ENCODE measurements at regions of chr7 and their contacts with region 1.

Region 1: DNA sequence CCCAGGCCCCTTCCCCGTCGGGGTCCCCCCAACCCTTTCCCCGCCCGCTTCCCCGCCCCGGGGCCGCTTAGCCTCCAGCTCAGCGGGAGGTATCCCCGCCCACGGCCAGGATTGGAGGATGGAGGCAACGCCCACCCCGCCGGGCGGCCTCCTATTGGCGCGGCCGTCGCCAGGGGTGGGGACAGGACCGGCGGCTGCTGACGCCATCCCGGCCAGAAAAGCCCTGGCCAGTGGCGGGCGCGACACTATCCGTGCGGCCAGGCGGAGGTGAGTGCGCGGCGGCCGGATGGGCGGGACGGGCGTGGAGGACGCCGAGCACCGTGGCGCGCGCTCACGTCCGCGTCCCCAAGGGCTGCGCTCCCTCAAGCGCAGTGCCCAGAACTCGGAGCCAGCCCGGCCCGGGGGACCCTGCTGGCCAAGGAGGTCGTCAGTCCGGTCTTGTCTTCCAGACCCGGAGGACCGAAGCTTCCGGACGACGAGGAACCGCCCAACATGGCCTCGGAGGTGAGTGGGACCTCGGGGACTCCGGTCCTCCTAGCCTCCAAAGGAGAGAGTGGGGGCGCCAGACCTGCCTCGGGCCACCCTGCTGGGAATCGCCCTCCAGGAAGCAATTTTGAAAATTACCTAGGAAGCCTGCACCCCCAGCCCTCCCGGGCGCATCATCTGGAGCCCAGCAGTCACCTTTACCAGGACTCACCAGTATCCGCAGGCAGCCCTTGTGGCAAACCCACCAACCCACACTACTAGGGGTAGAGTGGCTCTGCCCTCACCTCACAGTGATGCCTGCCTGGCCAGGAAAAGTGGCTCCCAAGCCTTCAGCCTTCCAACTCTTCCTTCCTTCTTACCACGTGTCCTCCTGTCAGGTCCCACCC is at the start of gene ASL:
- DNase-seq: peak; percentile 92
- ATAC-seq: peak; percentile 97 to 99 (median 97)
- H3K4me3 ChIP-seq: peak within 1 kb of the TSS; percentile 99
- H3K4me3 Mint-ChIP-seq: peak within 1 kb of the TSS; percentile 88
- H3K27ac ChIP-seq: peak within 1 kb of the TSS; percentile 82
- H3K27ac Mint-ChIP-seq: peak within 1 kb of the TSS; percentile 75 to 89
- H3K4me1 ChIP-seq: peaks cover 20% of the 10 kb centered on the region
- H3K4me1 Mint-ChIP-seq: peaks cover 18 to 23% of the 10 kb centered on the region in 2 donors
- H3K27me3 ChIP-seq: no peaks in the 10 kb centered on the region
- H3K27me3 Mint-ChIP-seq: no peaks in the 10 kb centered on the region
- CTCF ChIP-seq: no peak
- total RNA-seq, gene ASL: 58.1 to 69.9 (median 60.0) TPM

Region 2: GRCh38 chr7:66016129-66016457 is 59.7 kb before region 1 on chr7:
- intact Hi-C with region 1: no loop called
- DNase-seq: no peak
- ATAC-seq: no peak
- H3K4me3 ChIP-seq: no peak overlapping the region
- H3K4me3 Mint-ChIP-seq: no peak overlapping the region
- H3K27ac ChIP-seq: no peak overlapping the region
- H3K27ac Mint-ChIP-seq: no peak overlapping the region
- H3K4me1 ChIP-seq: no peaks in the 10 kb centered on the region
- H3K4me1 Mint-ChIP-seq: no peaks in the 10 kb centered on the region
- H3K27me3 ChIP-seq: no peaks in the 10 kb centered on the region
- H3K27me3 Mint-ChIP-seq: peaks cover 4 to 13% of the 10 kb centered on the region in 2 donors
- CTCF ChIP-seq: no peak

Region 3: DNA sequence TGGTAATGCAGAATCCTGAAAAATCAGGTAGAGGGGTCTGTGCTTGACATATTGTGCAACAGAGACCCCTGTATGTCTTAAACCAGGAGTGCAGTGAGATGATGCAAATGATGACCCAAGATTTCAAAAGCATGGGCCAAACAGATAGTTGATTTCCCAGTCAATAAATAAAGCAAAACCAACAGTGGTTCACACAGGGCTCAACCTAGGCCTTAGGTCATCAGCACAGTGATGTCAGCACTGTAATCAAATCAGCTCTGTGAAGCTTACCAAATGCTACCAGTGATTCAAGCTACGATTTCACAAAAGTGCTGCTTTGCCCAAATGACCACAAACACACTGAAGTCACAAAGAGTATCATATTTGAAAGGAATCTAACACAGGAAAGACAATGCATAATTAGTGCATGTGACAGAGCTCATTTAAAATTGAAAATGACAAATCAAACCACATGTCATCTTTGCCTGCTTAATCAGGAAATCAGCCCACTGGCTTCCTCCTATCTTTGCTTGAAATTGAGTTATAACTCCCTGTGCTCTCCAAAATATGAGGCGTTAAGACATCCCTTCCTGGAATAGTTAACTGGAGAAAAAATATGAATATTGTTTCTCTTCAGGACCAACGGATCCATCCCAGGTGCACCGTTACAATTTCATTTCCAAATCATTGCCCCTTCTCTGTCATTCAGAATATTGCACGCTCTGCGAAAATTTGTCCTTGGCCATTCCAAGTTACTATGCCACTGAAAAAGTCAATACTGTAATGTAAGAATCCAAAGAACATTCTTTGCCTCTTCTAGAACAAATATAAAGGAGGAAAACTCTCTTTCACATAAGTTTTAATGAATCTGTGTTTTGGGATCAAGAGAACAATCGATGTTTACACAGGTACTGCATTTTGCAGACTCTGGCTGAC is 42.1 kb before region 1 on chr7:
- intact Hi-C with region 1: loop called (anchors 2 kb)
- DNase-seq: peak; percentile 28 to 40
- ATAC-seq: peak; percentile 91 to 96 (median 93)
- H3K4me3 ChIP-seq: no peak overlapping the region
- H3K4me3 Mint-ChIP-seq: peak overlapping the region; percentile 66
- H3K27ac ChIP-seq: peak overlapping the region; percentile 75
- H3K27ac Mint-ChIP-seq: peak overlapping the region; percentile 82 to 96
- H3K4me1 ChIP-seq: peaks cover 6% of the 10 kb centered on the region
- H3K4me1 Mint-ChIP-seq: peaks cover 22 to 23% of the 10 kb centered on the region in 2 donors
- H3K27me3 ChIP-seq: no peaks in the 10 kb centered on the region
- H3K27me3 Mint-ChIP-seq: no peaks in the 10 kb centered on the region
- CTCF ChIP-seq: no peak

Region 4: GRCh38 chr7:66114793-66115649 is 39.2 kb after region 1 on chr7 and contains the start of gene CRCP:
- intact Hi-C with region 1: loop called (anchors 1 kb)
- DNase-seq: peak; percentile 86 to 93
- ATAC-seq: peak; percentile 81 to 93 (median 84)
- H3K4me3 ChIP-seq: peak within 1 kb of the TSS; percentile 69
- H3K4me3 Mint-ChIP-seq: peak within 1 kb of the TSS; percentile 98
- H3K27ac ChIP-seq: peak within 1 kb of the TSS; percentile 83
- H3K27ac Mint-ChIP-seq: peak within 1 kb of the TSS; percentile 99 to 100
- H3K4me1 ChIP-seq: peaks cover 20% of the 10 kb centered on the region
- H3K4me1 Mint-ChIP-seq: peaks cover 42 to 45% of the 10 kb centered on the region in 2 donors
- H3K27me3 ChIP-seq: no peaks in the 10 kb centered on the region
- H3K27me3 Mint-ChIP-seq: no peaks in the 10 kb centered on the region
- CTCF ChIP-seq: peak; percentile 19
- total RNA-seq, gene CRCP: 67.5 to 72.1 (median 68.0) TPM

Region 5: GRCh38 chr7:66125052-66125708 is 49.4 kb after region 1 on chr7:
- intact Hi-C with region 1: loop called (anchors 5 kb)
- DNase-seq: peak in 1 of 2 donors; percentile 14
- ATAC-seq: peak; percentile 48 to 51 (median 50)
- H3K4me3 ChIP-seq: no peak overlapping the region
- H3K4me3 Mint-ChIP-seq: peak overlapping the region; percentile 68
- H3K27ac ChIP-seq: peak overlapping the region; percentile 85
- H3K27ac Mint-ChIP-seq: peak overlapping the region; percentile 94 to 99
- H3K4me1 ChIP-seq: peaks cover 7% of the 10 kb centered on the region
- H3K4me1 Mint-ChIP-seq: peaks cover 37 to 41% of the 10 kb centered on the region in 2 donors
- H3K27me3 ChIP-seq: no peaks in the 10 kb centered on the region
- H3K27me3 Mint-ChIP-seq: no peaks in the 10 kb centered on the region
- CTCF ChIP-seq: no peak

Region 6: GRCh38 chr7:66150471-66150870 is 74.6 kb after region 1 on chr7:
- intact Hi-C with region 1: loop called (anchors 5 kb)
- DNase-seq: peak in 1 of 2 donors; percentile 17
- ATAC-seq: no peak
- H3K4me3 ChIP-seq: no peak overlapping the region
- H3K4me3 Mint-ChIP-seq: no peak overlapping the region
- H3K27ac ChIP-seq: peak overlapping the region; percentile 42
- H3K27ac Mint-ChIP-seq: peak overlapping the region; percentile 95 to 96
- H3K4me1 ChIP-seq: peaks cover 36% of the 10 kb centered on the region
- H3K4me1 Mint-ChIP-seq: peaks cover 41 to 42% of the 10 kb centered on the region in 2 donors
- H3K27me3 ChIP-seq: no peaks in the 10 kb centered on the region
- H3K27me3 Mint-ChIP-seq: no peaks in the 10 kb centered on the region
- CTCF ChIP-seq: no peak

Region 7: GRCh38 chr7:66204822-66205740 is 129.3 kb after region 1 on chr7 and contains the start of gene TPST1:
- intact Hi-C with region 1: loop called (anchors 5 kb)
- DNase-seq: peak; percentile 88
- ATAC-seq: peak; percentile 88 to 92 (median 90)
- H3K4me3 ChIP-seq: peak within 1 kb of the TSS; percentile 59
- H3K4me3 Mint-ChIP-seq: peak within 1 kb of the TSS; percentile 96
- H3K27ac ChIP-seq: peak within 1 kb of the TSS; percentile 46
- H3K27ac Mint-ChIP-seq: peak within 1 kb of the TSS; percentile 84
- H3K4me1 ChIP-seq: peaks cover 16% of the 10 kb centered on the region
- H3K4me1 Mint-ChIP-seq: peaks cover 27% of the 10 kb centered on the region in 2 donors
- H3K27me3 ChIP-seq: peaks cover 2% of the 10 kb centered on the region
- H3K27me3 Mint-ChIP-seq: peaks cover 0 to 2% of the 10 kb centered on the region in 2 donors
- CTCF ChIP-seq: peak; percentile 55
- total RNA-seq, gene TPST1: 10.4 to 17.3 (median 14.3) TPM

Region 8: GRCh38 chr7:66493235-66494181 is 417.7 kb after region 1 on chr7:
- intact Hi-C with region 1: loop called (anchors 5 kb)
- DNase-seq: peak; percentile 94 to 99
- ATAC-seq: peak; percentile 92 to 98 (median 93)
- H3K4me3 ChIP-seq: peak overlapping the region; percentile 71
- H3K4me3 Mint-ChIP-seq: peak overlapping the region; percentile 90
- H3K27ac ChIP-seq: peak overlapping the region; percentile 92
- H3K27ac Mint-ChIP-seq: peak overlapping the region; percentile 98
- H3K4me1 ChIP-seq: peaks cover 17% of the 10 kb centered on the region
- H3K4me1 Mint-ChIP-seq: peaks cover 9 to 16% of the 10 kb centered on the region in 2 donors
- H3K27me3 ChIP-seq: no peaks in the 10 kb centered on the region
- H3K27me3 Mint-ChIP-seq: no peaks in the 10 kb centered on the region
- CTCF ChIP-seq: peak; percentile 27